ENCODE measurements at regions of chr7 and their contacts with region 1.

Region 1: DNA sequence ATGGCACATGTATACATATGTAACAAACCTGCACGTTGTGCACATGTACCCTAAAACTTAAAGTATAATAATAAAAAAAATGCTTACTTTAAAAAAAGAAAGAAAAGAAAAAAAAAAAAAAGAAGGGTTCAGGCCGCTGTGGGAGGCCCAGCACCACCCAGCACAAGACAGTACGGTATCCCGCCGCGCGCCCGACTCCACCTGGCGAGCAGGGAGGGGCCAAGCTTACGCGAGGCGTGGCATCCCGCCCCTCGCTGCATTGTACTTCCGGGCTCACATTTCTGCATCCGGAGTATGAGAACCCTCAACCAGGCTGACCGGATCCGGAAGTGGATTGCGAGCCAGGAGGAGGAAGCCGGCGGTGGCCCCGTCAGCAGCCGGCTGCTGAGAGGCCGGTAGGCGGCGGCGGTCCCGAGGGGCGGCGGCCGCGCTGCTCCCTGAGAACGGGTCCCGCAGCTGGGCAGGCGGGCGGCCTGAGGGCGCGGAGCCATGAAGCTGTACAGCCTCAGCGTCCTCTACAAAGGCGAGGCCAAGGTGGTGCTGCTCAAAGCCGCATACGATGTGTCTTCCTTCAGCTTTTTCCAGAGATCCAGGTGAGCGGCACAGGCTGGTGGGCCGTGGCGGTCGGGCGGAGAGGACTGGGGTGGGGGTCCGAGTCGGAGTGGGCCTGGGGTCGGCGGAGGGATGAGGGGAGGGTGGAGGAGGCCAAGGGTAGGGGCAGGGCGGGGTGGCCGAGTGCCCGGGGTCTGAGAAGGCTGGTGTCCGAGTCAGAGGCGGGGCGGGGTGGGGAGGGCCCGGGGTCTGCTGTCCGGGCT is at the start of gene YKT6:
- DNase-seq: peak; percentile 97
- H3K4me3 Mint-ChIP-seq: peak within 1 kb of the TSS; percentile 78
- H3K27ac Mint-ChIP-seq: peak within 1 kb of the TSS; percentile 75
- H3K4me1 Mint-ChIP-seq: peaks cover 22% of the 10 kb centered on the region
- H3K27me3 Mint-ChIP-seq: no peaks in the 10 kb centered on the region
- CTCF ChIP-seq: peak; percentile 46
- total RNA-seq, gene YKT6: 107 and 153 TPM in 2 replicates

Region 2: GRCh38 chr7:43353902-43354301 is 847.0 kb before region 1 on chr7:
- CTCF ChIA-PET with region 1: no interaction called
- POLR2A ChIA-PET with region 1: no interaction called
- intact Hi-C with region 1: no loop called
- DNase-seq: peak; percentile 4
- H3K4me3 Mint-ChIP-seq: no peak overlapping the region
- H3K27ac Mint-ChIP-seq: no peak overlapping the region
- H3K4me1 Mint-ChIP-seq: no peaks in the 10 kb centered on the region
- H3K27me3 Mint-ChIP-seq: no peaks in the 10 kb centered on the region
- CTCF ChIP-seq: peak; percentile 7

Region 3: GRCh38 chr7:44044315-44045225 is 156.3 kb before region 1 on chr7 and contains the start of gene DBNL:
- CTCF ChIA-PET with region 1: no interaction called
- POLR2A ChIA-PET with region 1: interaction called, 14 read pairs
- intact Hi-C with region 1: no loop called
- DNase-seq: peak; percentile 86
- H3K4me3 Mint-ChIP-seq: peak within 1 kb of the TSS; percentile 78
- H3K27ac Mint-ChIP-seq: peak within 1 kb of the TSS; percentile 86
- H3K4me1 Mint-ChIP-seq: peaks cover 26% of the 10 kb centered on the region
- H3K27me3 Mint-ChIP-seq: no peaks in the 10 kb centered on the region
- CTCF ChIP-seq: no peak
- total RNA-seq, gene DBNL: 49.7 and 52.9 TPM in 2 replicates

Region 4: GRCh38 chr7:44072364-44073231 is 128.3 kb before region 1 on chr7:
- CTCF ChIA-PET with region 1: interaction called, 7 read pairs
- POLR2A ChIA-PET with region 1: interaction called, 3 read pairs
- intact Hi-C with region 1: loop called (anchors 1 kb)
- DNase-seq: peak; percentile 96
- H3K4me3 Mint-ChIP-seq: peak overlapping the region; percentile 54
- H3K27ac Mint-ChIP-seq: peak overlapping the region; percentile 42
- H3K4me1 Mint-ChIP-seq: peaks cover 35% of the 10 kb centered on the region
- H3K27me3 Mint-ChIP-seq: no peaks in the 10 kb centered on the region
- CTCF ChIP-seq: peak; percentile 80

Region 5: GRCh38 chr7:44123190-44124003 is 77.5 kb before region 1 on chr7 and contains the start of gene POLD2:
- CTCF ChIA-PET with region 1: no interaction called
- POLR2A ChIA-PET with region 1: interaction called, 11 read pairs
- intact Hi-C with region 1: loop called (anchors 5 kb)
- DNase-seq: peak; percentile 95
- H3K4me3 Mint-ChIP-seq: peak within 1 kb of the TSS; percentile 77
- H3K27ac Mint-ChIP-seq: peak within 1 kb of the TSS; percentile 86
- H3K4me1 Mint-ChIP-seq: peaks cover 27% of the 10 kb centered on the region
- H3K27me3 Mint-ChIP-seq: no peaks in the 10 kb centered on the region
- CTCF ChIP-seq: no peak
- total RNA-seq, gene POLD2: 118 and 179 TPM in 2 replicates

Region 6: GRCh38 chr7:44212018-44212417 is 11.2 kb after region 1 on chr7:
- CTCF ChIA-PET with region 1: interaction called, 4 read pairs
- POLR2A ChIA-PET with region 1: interaction called, 14 read pairs
- intact Hi-C with region 1: no loop called
- DNase-seq: no peak
- H3K4me3 Mint-ChIP-seq: no peak overlapping the region
- H3K27ac Mint-ChIP-seq: no peak overlapping the region
- H3K4me1 Mint-ChIP-seq: no peaks in the 10 kb centered on the region
- H3K27me3 Mint-ChIP-seq: no peaks in the 10 kb centered on the region
- CTCF ChIP-seq: no peak

Measured in MCF 10A (cell line).